PC-9 (cell line): ENCODE measurements at regions of chr2 and their contacts with region 1.

Region 1: GRCh38 chr2:217959723-217960122 is 43.1 kb downstream of the TNS1 start:
- DNase-seq: no peak
- H3K4me3 ChIP-seq: no peak overlapping the region
- H3K27ac ChIP-seq: no peak overlapping the region
- H3K4me1 ChIP-seq: no peaks in the 10 kb centered on the region
- H3K27me3 ChIP-seq: no peaks in the 10 kb centered on the region
- CTCF ChIP-seq: no peak

Region 2: GRCh38 chr2:217978536-217979165 is 18.9 kb after region 1 on chr2:
- CTCF ChIA-PET with region 1: no interaction called
- POLR2A ChIA-PET with region 1: no interaction called
- intact Hi-C with region 1: loop called (anchors 2 kb)
- DNase-seq: no peak
- H3K4me3 ChIP-seq: no peak overlapping the region
- H3K27ac ChIP-seq: no peak overlapping the region
- H3K4me1 ChIP-seq: no peaks in the 10 kb centered on the region
- H3K27me3 ChIP-seq: peaks cover 24% of the 10 kb centered on the region
- CTCF ChIP-seq: no peak